Common myeloid progenitor, CD34-positive (primary cell): ENCODE measurements at regions of chr2 and their contacts with region 1.

Region 1: GRCh38 chr2:70137519-70137918 is 50.2 kb downstream of the PCBP1 start:
- DNase-seq: peak in 2 of 3 donors; percentile 76 to 77
- H3K4me3 ChIP-seq: no peak overlapping the region
- H3K27ac ChIP-seq: no peak overlapping the region
- H3K4me1 ChIP-seq: peaks cover 33 to 84% (median 68%) of the 10 kb centered on the region in 4 experiments
- H3K27me3 ChIP-seq: no peaks in the 10 kb centered on the region

Region 2: DNA sequence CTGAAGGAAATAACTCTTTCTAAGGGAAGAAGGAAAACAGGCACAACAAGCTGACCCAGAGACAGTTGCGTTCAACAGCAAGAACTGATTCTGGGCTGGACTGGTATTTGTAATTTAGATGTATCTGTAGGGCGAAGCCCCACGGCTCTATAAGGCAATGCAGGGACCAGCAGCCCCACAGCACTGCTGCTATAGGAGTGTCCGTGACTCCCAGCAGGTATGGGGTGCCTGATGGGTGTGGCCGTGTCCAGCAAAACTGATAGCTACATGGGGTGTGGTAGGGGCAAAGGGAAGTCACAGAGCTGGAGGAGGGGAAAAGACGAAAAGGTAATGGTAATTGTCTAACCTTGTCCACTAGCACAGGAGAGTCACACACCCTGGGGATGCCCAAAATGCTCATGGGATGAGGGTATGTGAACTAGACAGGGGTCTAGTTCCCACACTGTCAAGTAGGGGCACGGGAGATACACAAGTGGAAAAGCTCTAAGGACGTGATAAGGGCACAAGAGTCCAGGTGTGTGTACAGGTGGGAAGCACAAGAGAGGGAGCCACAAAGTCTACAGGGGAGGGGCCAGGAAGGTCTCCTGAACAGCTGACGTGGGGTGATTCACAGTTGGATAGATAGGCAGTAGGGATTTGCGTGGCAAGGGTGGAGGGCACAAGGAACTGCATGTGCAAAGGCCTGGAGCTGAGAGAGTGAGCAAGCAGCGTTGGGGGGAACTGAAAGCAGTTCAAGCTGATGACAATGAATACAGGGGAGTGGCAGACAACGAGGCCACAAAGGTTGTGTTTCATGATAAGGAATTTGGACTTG is 127.5 kb before region 1 on chr2:
- CTCF ChIA-PET with region 1: no interaction called
- POLR2A ChIA-PET with region 1: no interaction called
- DNase-seq: peak; percentile 16 to 74 (median 54)
- H3K4me3 ChIP-seq: no peak overlapping the region
- H3K27ac ChIP-seq: peak overlapping the region in 1 of 2 experiments; percentile 9
- H3K4me1 ChIP-seq: peaks cover 0 to 10% (median 4%) of the 10 kb centered on the region in 4 experiments
- H3K27me3 ChIP-seq: no peaks in the 10 kb centered on the region

Region 3: DNA sequence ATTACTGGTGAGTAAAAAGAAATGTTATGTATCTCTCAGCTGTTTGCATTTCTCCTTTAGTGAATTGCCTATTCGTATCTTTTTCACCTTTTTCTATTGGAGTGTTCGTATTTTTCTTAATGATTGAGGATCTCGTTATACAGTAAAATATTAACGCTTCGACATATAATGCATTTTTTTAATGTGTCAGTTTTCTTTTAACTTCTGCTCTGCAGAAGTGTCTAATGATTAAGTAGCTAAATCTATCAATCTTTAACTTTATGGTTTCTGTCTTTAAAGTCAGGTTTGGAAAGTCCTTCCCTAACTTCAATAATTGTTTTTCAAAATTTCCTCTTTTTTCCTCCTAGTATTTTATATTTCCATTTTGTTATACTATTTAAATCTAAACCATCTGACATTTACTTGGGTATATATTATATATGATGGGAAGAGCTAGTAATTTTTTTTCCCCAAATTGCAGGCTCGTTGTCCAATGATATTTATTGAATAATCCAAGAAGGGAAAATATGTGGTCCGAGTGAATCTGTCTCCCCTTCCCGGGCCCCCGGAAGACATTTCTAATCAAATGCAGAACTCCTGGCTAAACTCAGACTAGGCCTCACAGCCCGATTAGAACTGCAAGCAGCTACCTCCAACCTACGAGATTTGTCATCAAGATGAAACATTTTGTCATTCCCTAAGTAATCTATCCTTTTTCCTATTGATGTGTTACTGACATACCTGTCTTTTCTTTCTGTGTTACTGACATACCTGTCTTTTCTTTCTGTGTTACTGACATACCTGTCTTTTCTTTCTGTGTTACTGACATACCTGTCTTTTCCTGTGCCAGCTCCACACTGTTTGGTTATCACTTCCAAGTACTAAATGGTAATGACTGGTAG is 33.0 kb before region 1 on chr2:
- CTCF ChIA-PET with region 1: interaction called, 16 read pairs
- POLR2A ChIA-PET with region 1: no interaction called
- DNase-seq: peak; percentile 72 to 81 (median 76)
- H3K4me3 ChIP-seq: peak overlapping the region in 5 of 7 experiments; percentile 32 to 49 (median 46)
- H3K27ac ChIP-seq: peak overlapping the region; percentile 46 to 76
- H3K4me1 ChIP-seq: peaks cover 21 to 45% (median 33%) of the 10 kb centered on the region in 4 experiments
- H3K27me3 ChIP-seq: no peaks in the 10 kb centered on the region